B cell (primary cell): ENCODE measurements at regions of chr18 and their contacts with region 1.

Region 1: GRCh38 chr18:62714671-62715435 is 488 bp upstream of the PHLPP1 start:
- DNase-seq: peak; percentile 96
- ATAC-seq: peak; percentile 81
- H3K4me3 ChIP-seq: peak overlapping the region; percentile 6 to 85 (median 75)
- H3K4me3 Mint-ChIP-seq: peak overlapping the region; percentile 95
- H3K27ac ChIP-seq: peak overlapping the region; percentile 85 to 92
- H3K27ac Mint-ChIP-seq: peak overlapping the region; percentile 97
- H3K4me1 ChIP-seq: peaks cover 15 to 18% of the 10 kb centered on the region in 2 donors
- H3K4me1 Mint-ChIP-seq: peaks cover 34% of the 10 kb centered on the region
- H3K27me3 ChIP-seq: no peaks in the 10 kb centered on the region
- H3K27me3 Mint-ChIP-seq: no peaks in the 10 kb centered on the region
- CTCF ChIP-seq: peak; percentile 77

Region 2: GRCh38 chr18:62324917-62325805 is 389.7 kb before region 1 on chr18 and contains the start of gene TNFRSF11A:
- CTCF ChIA-PET with region 1: no interaction called
- POLR2A ChIA-PET with region 1: no interaction called
- intact Hi-C with region 1: loop called (anchors 5 kb)
- DNase-seq: peak; percentile 71
- ATAC-seq: peak; percentile 95
- H3K4me3 ChIP-seq: peak within 1 kb of the TSS; percentile 41 to 66 (median 59)
- H3K4me3 Mint-ChIP-seq: peak within 1 kb of the TSS; percentile 89
- H3K27ac ChIP-seq: no peak within 1 kb of the TSS
- H3K27ac Mint-ChIP-seq: peak within 1 kb of the TSS; percentile 64
- H3K4me1 ChIP-seq: peaks cover 24 to 27% of the 10 kb centered on the region in 2 donors
- H3K4me1 Mint-ChIP-seq: peaks cover 22% of the 10 kb centered on the region
- H3K27me3 ChIP-seq: peaks cover 0 to 55% (median 41%) of the 10 kb centered on the region in 4 experiments
- H3K27me3 Mint-ChIP-seq: peaks cover 64% of the 10 kb centered on the region
- CTCF ChIP-seq: peak; percentile 45
- total RNA-seq, gene TNFRSF11A: 0.41 and 1.7 TPM in 2 replicates

Region 3: GRCh38 chr18:62522504-62523254 is 192.2 kb before region 1 on chr18 and contains the start of gene ZCCHC2:
- CTCF ChIA-PET with region 1: no interaction called
- POLR2A ChIA-PET with region 1: interaction called, 4 read pairs
- intact Hi-C with region 1: loop called (anchors 1 kb)
- DNase-seq: peak; percentile 99
- ATAC-seq: peak; percentile 74
- H3K4me3 ChIP-seq: peak within 1 kb of the TSS; percentile 77 to 88 (median 86)
- H3K4me3 Mint-ChIP-seq: peak within 1 kb of the TSS; percentile 97
- H3K27ac ChIP-seq: peak within 1 kb of the TSS; percentile 73 to 93
- H3K27ac Mint-ChIP-seq: peak within 1 kb of the TSS; percentile 93
- H3K4me1 ChIP-seq: peaks cover 28 to 29% of the 10 kb centered on the region in 2 donors
- H3K4me1 Mint-ChIP-seq: peaks cover 29% of the 10 kb centered on the region
- H3K27me3 ChIP-seq: no peaks in the 10 kb centered on the region
- H3K27me3 Mint-ChIP-seq: no peaks in the 10 kb centered on the region
- CTCF ChIP-seq: no peak
- total RNA-seq, gene ZCCHC2: 53.7 and 63.0 TPM in 2 replicates

Region 4: GRCh38 chr18:62637807-62638687 is 76.8 kb before region 1 on chr18:
- CTCF ChIA-PET with region 1: no interaction called
- POLR2A ChIA-PET with region 1: no interaction called
- intact Hi-C with region 1: no loop called
- DNase-seq: peak; percentile 60
- ATAC-seq: peak; percentile 53
- H3K4me3 ChIP-seq: no peak overlapping the region
- H3K4me3 Mint-ChIP-seq: no peak overlapping the region
- H3K27ac ChIP-seq: no peak overlapping the region
- H3K27ac Mint-ChIP-seq: no peak overlapping the region
- H3K4me1 ChIP-seq: no peaks in the 10 kb centered on the region
- H3K4me1 Mint-ChIP-seq: no peaks in the 10 kb centered on the region
- H3K27me3 ChIP-seq: no peaks in the 10 kb centered on the region
- H3K27me3 Mint-ChIP-seq: peaks cover 15% of the 10 kb centered on the region
- CTCF ChIP-seq: peak; percentile 70

Region 5: DNA sequence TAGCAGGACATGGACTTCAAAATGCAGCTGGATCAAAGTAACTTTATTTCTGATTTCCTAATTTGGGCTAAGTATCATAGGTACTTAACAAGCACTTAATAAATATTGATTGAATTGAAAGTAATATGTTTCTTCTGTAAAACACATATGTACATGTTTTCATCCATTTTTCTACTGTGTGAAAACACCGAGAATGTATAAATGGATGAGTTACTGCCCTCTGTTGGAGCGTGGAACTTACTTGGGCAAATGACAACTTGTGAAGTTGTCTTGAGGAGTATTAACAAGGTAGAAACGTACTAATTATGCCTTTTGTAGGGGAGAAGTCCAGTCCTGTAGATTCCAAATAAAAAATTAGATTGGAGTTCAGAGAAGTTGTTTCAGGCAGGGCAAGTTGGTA is 87.7 kb after region 1 on chr18:
- CTCF ChIA-PET with region 1: interaction called, 3 read pairs
- POLR2A ChIA-PET with region 1: no interaction called
- intact Hi-C with region 1: loop called (anchors 2 kb)
- DNase-seq: peak; percentile 21
- ATAC-seq: no peak
- H3K4me3 ChIP-seq: no peak overlapping the region
- H3K4me3 Mint-ChIP-seq: no peak overlapping the region
- H3K27ac ChIP-seq: no peak overlapping the region
- H3K27ac Mint-ChIP-seq: no peak overlapping the region
- H3K4me1 ChIP-seq: no peaks in the 10 kb centered on the region
- H3K4me1 Mint-ChIP-seq: no peaks in the 10 kb centered on the region
- H3K27me3 ChIP-seq: no peaks in the 10 kb centered on the region
- H3K27me3 Mint-ChIP-seq: no peaks in the 10 kb centered on the region
- CTCF ChIP-seq: no peak

Region 6: DNA sequence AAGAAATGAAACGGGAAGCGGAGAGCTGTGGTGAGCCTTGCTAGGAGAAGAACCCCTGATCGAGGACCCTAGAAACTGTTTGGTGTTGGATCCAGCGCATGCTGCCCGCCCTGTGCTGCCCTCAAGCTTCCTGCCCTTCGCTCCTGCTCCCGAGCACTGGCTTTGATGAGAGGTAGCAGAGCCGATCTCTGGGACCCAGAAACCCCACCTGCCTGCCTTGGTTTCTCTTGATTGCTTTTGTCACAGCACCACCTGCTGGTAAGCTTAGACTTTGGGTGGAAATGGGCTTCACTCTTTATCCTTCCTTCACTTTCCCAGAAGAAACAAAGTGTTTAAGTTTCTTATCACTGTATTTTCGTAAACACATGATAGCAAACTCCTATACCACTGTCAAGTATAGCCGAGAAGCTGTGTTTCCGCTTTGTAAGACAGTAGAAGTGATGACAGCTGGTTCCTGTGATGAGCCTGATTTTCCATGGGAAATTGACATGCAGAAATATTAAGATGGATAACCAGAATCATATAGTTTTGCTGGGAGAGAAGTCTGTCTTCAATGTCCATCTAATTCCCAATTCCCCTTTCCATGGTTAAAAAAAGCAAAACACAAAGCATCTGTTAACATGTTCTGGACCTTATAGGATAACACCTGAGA is 267.9 kb after region 1 on chr18:
- CTCF ChIA-PET with region 1: interaction called, 62 read pairs
- POLR2A ChIA-PET with region 1: no interaction called
- intact Hi-C with region 1: loop called (anchors 1 kb)
- DNase-seq: peak; percentile 71
- ATAC-seq: peak; percentile 56
- H3K4me3 ChIP-seq: peak overlapping the region in 3 of 5 experiments; percentile 13 to 16 (median 15)
- H3K4me3 Mint-ChIP-seq: no peak overlapping the region
- H3K27ac ChIP-seq: no peak overlapping the region
- H3K27ac Mint-ChIP-seq: no peak overlapping the region
- H3K4me1 ChIP-seq: peaks cover 3 to 5% of the 10 kb centered on the region in 2 donors
- H3K4me1 Mint-ChIP-seq: peaks cover 6% of the 10 kb centered on the region
- H3K27me3 ChIP-seq: no peaks in the 10 kb centered on the region
- H3K27me3 Mint-ChIP-seq: no peaks in the 10 kb centered on the region
- CTCF ChIP-seq: peak; percentile 80

Region 7: DNA sequence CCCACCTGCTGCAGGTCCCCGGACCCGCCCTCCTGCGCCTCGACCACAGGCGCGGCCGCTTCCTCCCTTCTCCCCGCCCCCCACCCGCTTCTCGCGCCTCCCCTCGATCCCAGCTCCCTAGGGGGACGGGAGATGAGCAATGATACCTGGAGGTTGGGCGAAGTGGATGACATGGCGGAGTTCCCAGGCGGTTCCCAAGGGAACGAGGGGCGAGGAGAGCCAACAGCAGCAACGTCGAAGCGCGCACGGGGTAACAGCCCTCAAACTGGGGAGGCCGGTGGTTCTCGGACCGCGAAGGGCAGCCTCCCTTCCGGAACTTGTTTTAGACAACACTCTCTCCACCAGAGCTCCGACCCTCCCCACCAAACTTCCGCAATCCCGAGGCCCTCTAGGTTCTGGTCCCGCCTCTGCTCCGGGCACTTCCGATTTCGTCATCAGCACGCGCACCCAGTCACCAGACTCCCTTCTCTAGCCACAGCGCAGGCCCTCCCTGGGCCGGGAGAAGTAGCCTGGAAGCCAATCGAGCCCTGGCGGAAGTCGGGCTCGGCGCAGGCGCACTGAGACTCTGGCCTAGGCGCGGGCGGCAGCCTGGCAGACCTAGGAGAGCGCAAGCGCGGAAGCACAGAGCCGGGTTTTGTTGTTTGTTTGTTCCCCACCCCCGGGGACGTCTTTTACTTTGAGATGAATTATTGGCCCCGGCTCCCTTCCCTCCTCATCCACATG is 707.4 kb after region 1 on chr18 and contains the start of gene VPS4B:
- CTCF ChIA-PET with region 1: no interaction called
- POLR2A ChIA-PET with region 1: interaction called, 11 read pairs
- intact Hi-C with region 1: no loop called
- DNase-seq: peak; percentile 100
- ATAC-seq: peak; percentile 96
- H3K4me3 ChIP-seq: peak within 1 kb of the TSS; percentile 73 to 99 (median 82)
- H3K4me3 Mint-ChIP-seq: peak within 1 kb of the TSS; percentile 99
- H3K27ac ChIP-seq: peak within 1 kb of the TSS; percentile 93 to 99
- H3K27ac Mint-ChIP-seq: peak within 1 kb of the TSS; percentile 96
- H3K4me1 ChIP-seq: peaks cover 18 to 21% of the 10 kb centered on the region in 2 donors
- H3K4me1 Mint-ChIP-seq: peaks cover 35% of the 10 kb centered on the region
- H3K27me3 ChIP-seq: no peaks in the 10 kb centered on the region
- H3K27me3 Mint-ChIP-seq: peaks cover 9% of the 10 kb centered on the region
- CTCF ChIP-seq: peak; percentile 0
- total RNA-seq, gene VPS4B: 91.5 and 93.9 TPM in 2 replicates

Region 8: GRCh38 chr18:63534615-63535014 is 819.8 kb after region 1 on chr18:
- CTCF ChIA-PET with region 1: no interaction called
- POLR2A ChIA-PET with region 1: no interaction called
- intact Hi-C with region 1: no loop called
- DNase-seq: no peak
- ATAC-seq: no peak
- H3K4me3 ChIP-seq: no peak overlapping the region
- H3K4me3 Mint-ChIP-seq: no peak overlapping the region
- H3K27ac ChIP-seq: no peak overlapping the region
- H3K27ac Mint-ChIP-seq: no peak overlapping the region
- H3K4me1 ChIP-seq: no peaks in the 10 kb centered on the region
- H3K4me1 Mint-ChIP-seq: no peaks in the 10 kb centered on the region
- H3K27me3 ChIP-seq: no peaks in the 10 kb centered on the region
- H3K27me3 Mint-ChIP-seq: peaks cover 33% of the 10 kb centered on the region
- CTCF ChIP-seq: no peak

Region 9: DNA sequence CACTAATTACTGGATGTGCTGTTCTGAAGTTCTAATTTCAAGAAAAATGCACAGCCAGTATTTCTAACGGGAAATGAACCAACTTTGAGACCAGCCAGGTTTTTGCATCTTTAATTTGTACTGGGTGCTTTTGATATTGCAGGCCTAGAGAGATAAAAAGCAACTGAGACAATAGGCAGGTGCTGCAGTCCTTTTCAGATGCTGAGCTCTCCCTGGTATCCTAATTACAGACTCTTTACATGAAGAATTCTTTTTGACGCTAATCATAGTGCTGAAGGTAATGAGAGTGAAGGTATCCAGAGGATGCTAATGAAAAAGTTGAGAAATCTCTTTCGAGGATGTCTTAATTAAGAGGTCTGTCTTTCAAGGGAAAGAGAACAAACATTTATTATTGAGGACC is 1340.2 kb after region 1 on chr18:
- CTCF ChIA-PET with region 1: no interaction called
- POLR2A ChIA-PET with region 1: no interaction called
- intact Hi-C with region 1: no loop called
- DNase-seq: no peak
- ATAC-seq: no peak
- H3K4me3 ChIP-seq: no peak overlapping the region
- H3K4me3 Mint-ChIP-seq: no peak overlapping the region
- H3K27ac ChIP-seq: no peak overlapping the region
- H3K27ac Mint-ChIP-seq: no peak overlapping the region
- H3K4me1 ChIP-seq: no peaks in the 10 kb centered on the region
- H3K4me1 Mint-ChIP-seq: no peaks in the 10 kb centered on the region
- H3K27me3 ChIP-seq: no peaks in the 10 kb centered on the region
- H3K27me3 Mint-ChIP-seq: peaks cover 4% of the 10 kb centered on the region
- CTCF ChIP-seq: no peak